ENCODE measurements at regions of chr5 and their contacts with region 1.

Region 1: DNA sequence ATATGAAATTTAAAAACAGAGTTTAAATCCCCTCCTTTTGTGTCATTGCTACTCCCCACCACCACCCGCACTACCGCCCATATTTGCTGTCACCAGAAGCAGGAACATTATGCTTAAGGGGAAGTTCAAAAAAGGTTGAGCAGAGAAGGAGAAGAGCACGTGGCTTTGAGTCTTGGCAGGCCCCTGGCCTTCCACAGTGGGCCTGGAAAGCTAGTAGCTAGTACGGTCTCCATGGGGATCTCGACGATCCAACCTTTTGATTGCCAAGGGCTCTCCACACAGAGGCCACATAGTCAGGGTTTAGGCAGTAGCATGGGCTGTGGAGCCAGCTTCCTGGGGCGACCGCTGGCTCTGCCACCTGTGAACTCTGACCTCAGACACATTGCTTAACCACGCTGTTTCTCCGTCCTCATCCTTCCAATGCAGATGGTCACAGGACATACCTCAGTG is 90.1 kb downstream of the GOLPH3 start:
- DNase-seq: no peak
- H3K4me3 ChIP-seq: no peak overlapping the region
- H3K27ac ChIP-seq: no peak overlapping the region
- H3K4me1 ChIP-seq: no peaks in the 10 kb centered on the region
- H3K27me3 ChIP-seq: no peaks in the 10 kb centered on the region
- CTCF ChIP-seq: no peak
- POLR2A ChIP-seq: no peak

Region 2: DNA sequence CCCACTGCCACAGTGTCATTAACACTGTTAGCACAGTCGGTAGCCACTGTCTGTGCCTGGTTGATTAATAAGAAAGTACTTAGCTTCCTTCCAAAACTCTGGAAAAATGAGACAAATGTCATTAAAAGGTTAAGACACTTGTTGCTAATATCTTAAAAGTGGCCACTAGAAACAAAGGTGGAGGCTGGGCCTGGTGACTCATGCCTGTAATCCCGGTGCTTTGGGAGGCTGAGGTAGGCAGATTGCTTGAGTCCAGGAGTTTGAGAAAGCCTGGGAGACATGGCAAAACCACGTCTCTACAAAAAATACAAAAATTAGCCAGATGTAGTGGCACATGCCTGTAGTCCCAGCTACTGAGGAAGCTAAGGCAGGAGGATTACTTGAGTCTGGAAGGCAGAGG is 251.0 kb before region 1 on chr5:
- intact Hi-C with region 1: loop called (anchors 5 kb)
- DNase-seq: no peak
- H3K4me3 ChIP-seq: no peak overlapping the region
- H3K27ac ChIP-seq: no peak overlapping the region
- H3K4me1 ChIP-seq: no peaks in the 10 kb centered on the region
- H3K27me3 ChIP-seq: no peaks in the 10 kb centered on the region
- CTCF ChIP-seq: no peak
- POLR2A ChIP-seq: no peak

Region 3: DNA sequence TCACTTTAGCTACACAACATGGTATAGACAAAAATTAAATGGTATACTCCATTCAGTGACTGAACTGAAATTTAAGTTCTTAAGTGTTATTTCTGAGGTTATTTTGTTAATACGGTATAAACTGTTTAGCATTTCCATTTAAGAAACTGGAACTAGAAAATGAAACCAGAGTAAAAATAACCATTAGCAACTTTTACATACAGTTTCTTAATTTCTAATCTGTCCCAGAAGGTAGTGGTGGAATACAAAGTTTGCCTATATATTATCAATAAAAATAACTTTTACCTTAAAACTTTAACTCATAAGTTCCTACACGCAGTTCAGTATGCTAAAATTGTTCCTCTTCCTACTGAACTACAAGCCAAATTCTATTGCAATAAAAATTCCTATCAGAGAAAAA is 79.8 kb after region 1 on chr5:
- intact Hi-C with region 1: no loop called
- DNase-seq: no peak
- H3K4me3 ChIP-seq: no peak overlapping the region
- H3K27ac ChIP-seq: no peak overlapping the region
- H3K4me1 ChIP-seq: peaks cover 4 to 9% of the 10 kb centered on the region in 2 donors
- H3K27me3 ChIP-seq: no peaks in the 10 kb centered on the region
- CTCF ChIP-seq: no peak
- POLR2A ChIP-seq: no peak

Region 4: GRCh38 chr5:32559411-32559810 is 475.4 kb after region 1 on chr5:
- intact Hi-C with region 1: no loop called
- DNase-seq: no peak
- H3K4me3 ChIP-seq: no peak overlapping the region
- H3K27ac ChIP-seq: no peak overlapping the region
- H3K4me1 ChIP-seq: no peaks in the 10 kb centered on the region
- H3K27me3 ChIP-seq: no peaks in the 10 kb centered on the region
- CTCF ChIP-seq: no peak
- POLR2A ChIP-seq: no peak